HepG2 (cell line): ENCODE measurements at regions of chr10 and their contacts with region 1.

Region 1: GRCh38 chr10:96863922-96864543 is 31.9 kb downstream of the LCOR start:
- DNase-seq: peak; percentile 94
- ATAC-seq: peak; percentile 90
- H3K4me3 ChIP-seq: peak overlapping the region in 1 of 3 experiments; percentile 26; a peak in 1 of 6 replicates
- H3K27ac ChIP-seq: peak overlapping the region; percentile 68
- H3K4me1 ChIP-seq: peaks cover 81% of the 10 kb centered on the region
- H3K27me3 ChIP-seq: no peaks in the 10 kb centered on the region
- CTCF ChIP-seq: no peak
- EP300 ChIP-seq: peak in 1 of 2 experiments; percentile 77; a peak in 2 of 4 replicates
- POLR2A ChIP-seq: no peak
- RAD21 ChIP-seq: no peak

Region 2: GRCh38 chr10:96842896-96843723 is 20.9 kb before region 1 on chr10:
- CTCF ChIA-PET with region 1: no interaction called
- POLR2A ChIA-PET with region 1: interaction called, 7 read pairs
- in situ Hi-C with region 1: no loop called
- intact Hi-C with region 1: loop called (anchors 1 kb)
- DNase-seq: peak; percentile 99
- ATAC-seq: peak; percentile 97
- H3K4me3 ChIP-seq: peak overlapping the region in 1 of 3 experiments; percentile 26; a peak in 1 of 6 replicates
- H3K27ac ChIP-seq: peak overlapping the region; percentile 77
- H3K4me1 ChIP-seq: peaks cover 93% of the 10 kb centered on the region
- H3K27me3 ChIP-seq: no peaks in the 10 kb centered on the region
- CTCF ChIP-seq: no peak
- EP300 ChIP-seq: peak; percentile 81 to 96; a peak in 3 of 4 replicates
- POLR2A ChIP-seq: no peak
- RAD21 ChIP-seq: peak; percentile 26